Left cardiac atrium (tissue), 4 donors: ENCODE measurements at regions of chr7 and their contacts with region 1.

Region 1: GRCh38 chr7:103296901-103297836 is at the start of gene PMPCB:
- DNase-seq: peak; percentile 97
- ATAC-seq: peak; percentile 98
- total RNA-seq, gene PMPCB: 49.2 to 55.9 TPM

Region 2: GRCh38 chr7:103343758-103344452 is 46.7 kb after region 1 on chr7:
- intact Hi-C with region 1: loop called in 1 of 2 experiments (anchors 1 kb)
- DNase-seq: no peak
- ATAC-seq: peak; percentile 24 to 52